H1 (cell line): ENCODE measurements at regions of chr12 and their contacts with region 1.

Region 1: GRCh38 chr12:132162508-132163031 is 18.3 kb downstream of the NOC4L start:
- DNase-seq: no peak
- H3K4me3 ChIP-seq: no peak overlapping the region
- H3K27ac ChIP-seq: no peak overlapping the region
- H3K4me1 ChIP-seq: no peaks in the 10 kb centered on the region; a peak in 1 of 7 replicates
- H3K27me3 ChIP-seq: peaks cover 0 to 7% (median 2%) of the 10 kb centered on the region in 4 experiments; a peak in 4 of 7 replicates
- CTCF ChIP-seq: no peak
- EP300 ChIP-seq: no peak
- POLR2A ChIP-seq: no peak
- RAD21 ChIP-seq: no peak

Region 2: DNA sequence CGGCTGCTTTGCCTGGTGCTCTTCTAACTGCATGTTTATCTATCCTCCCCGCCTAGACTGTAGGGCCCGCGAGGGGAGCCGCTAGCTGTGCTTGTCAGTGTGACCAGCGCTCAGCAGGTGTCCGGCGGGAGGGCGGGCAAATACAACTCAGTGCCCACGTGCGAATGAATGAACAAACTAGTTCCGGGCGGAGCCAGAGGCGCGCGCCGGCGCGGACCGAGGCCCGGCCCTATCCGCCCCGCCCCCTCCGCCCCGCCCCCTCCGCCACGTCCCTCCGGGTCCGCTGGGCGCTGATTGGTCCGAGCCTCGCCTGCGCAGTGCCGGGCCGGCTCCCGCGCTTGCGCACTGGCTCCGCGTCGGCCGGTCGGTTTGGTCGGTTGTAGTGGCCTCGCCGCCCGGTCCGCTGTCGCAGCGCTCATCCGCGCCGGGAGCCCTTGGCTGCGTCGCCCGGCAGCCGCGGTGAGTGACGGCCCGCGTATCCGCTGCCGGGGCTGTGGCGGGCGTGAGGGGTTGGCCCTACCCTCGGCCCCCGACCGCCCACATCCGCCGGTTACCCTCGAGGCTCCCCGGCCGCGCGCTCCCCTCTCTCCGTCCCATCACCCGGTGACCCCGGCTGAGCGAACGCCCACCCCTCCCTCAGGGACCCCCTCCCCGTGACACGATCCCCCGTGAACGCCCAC is 78.5 kb before region 1 on chr12:
- CTCF ChIA-PET with region 1: no interaction called
- POLR2A ChIA-PET with region 1: no interaction called
- DNase-seq: peak; percentile 78 to 92
- H3K4me3 ChIP-seq: peak overlapping the region; percentile 57 to 90 (median 70)
- H3K27ac ChIP-seq: peak overlapping the region; percentile 86; the same call in 1 of the 2 replicates
- H3K4me1 ChIP-seq: peaks cover 3 to 10% (median 7%) of the 10 kb centered on the region in 4 experiments
- H3K27me3 ChIP-seq: no peaks in the 10 kb centered on the region
- CTCF ChIP-seq: no peak
- EP300 ChIP-seq: no peak
- POLR2A ChIP-seq: peak; percentile 79 to 83
- RAD21 ChIP-seq: no peak

Region 3: DNA sequence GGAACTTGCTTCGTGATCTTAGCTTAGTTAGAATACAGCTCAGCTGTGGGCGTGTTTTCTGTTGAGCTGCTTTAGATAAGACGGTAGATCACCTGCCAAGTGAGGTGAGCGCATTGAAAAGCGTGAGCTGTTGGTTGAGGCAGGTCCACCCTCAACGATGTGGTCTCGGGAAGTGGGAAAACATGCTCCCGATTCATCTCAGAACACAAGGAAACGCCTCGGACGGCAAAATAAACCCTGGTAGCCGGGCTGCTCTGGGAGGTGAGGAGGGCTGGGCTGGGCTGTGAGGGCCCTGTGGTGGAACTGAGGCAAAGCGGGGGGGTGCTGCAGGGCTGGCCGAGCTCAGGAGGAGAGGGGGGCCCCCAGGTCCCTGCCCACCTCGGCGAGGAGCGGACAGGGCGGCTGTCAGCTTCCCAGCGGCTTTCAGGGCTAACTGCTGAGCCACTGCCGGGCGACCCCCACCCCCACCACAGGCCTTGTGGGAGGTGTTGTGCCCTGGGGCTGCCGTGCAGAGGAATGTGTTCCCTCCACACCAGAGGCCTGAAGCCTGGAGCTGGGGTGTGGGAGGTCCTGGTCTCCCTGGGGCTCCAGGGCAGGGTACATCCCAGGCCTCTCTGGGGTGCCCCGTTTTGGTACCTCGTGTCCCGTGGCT is 12.4 kb after region 1 on chr12:
- CTCF ChIA-PET with region 1: interaction called, 8 read pairs
- POLR2A ChIA-PET with region 1: interaction called, 10 read pairs
- DNase-seq: no peak
- H3K4me3 ChIP-seq: no peak overlapping the region
- H3K27ac ChIP-seq: no peak overlapping the region
- H3K4me1 ChIP-seq: 0 out of 7 replicates have a peak, but pooled peaks cover 0 to 2% (median 0%) of the 10 kb centered on the region in 4 experiments
- H3K27me3 ChIP-seq: peaks cover 0 to 26% (median 20%) of the 10 kb centered on the region in 4 experiments; a peak in 4 of 7 replicates
- CTCF ChIP-seq: no peak
- EP300 ChIP-seq: no peak
- POLR2A ChIP-seq: no peak
- RAD21 ChIP-seq: no peak